ENCODE measurements at regions of chr11 and their contacts with region 1.

Region 1: GRCh38 chr11:119421941-119422808 is 797 bp downstream of the THY1 start:
- DNase-seq: no peak
- H3K4me3 ChIP-seq: peak overlapping the region; percentile 76 to 91 (median 90)
- H3K27ac ChIP-seq: peak overlapping the region; percentile 43
- H3K4me1 ChIP-seq: peaks cover 20 to 40% (median 27%) of the 10 kb centered on the region in 4 experiments
- H3K27me3 ChIP-seq: no peaks in the 10 kb centered on the region; a peak in 1 of 7 replicates
- CTCF ChIP-seq: no peak
- EP300 ChIP-seq: no peak
- POLR2A ChIP-seq: peak in 1 of 2 experiments; percentile 37; a peak in 1 of 3 replicates
- RAD21 ChIP-seq: no peak

Region 2: GRCh38 chr11:119373921-119374631 is 48.1 kb before region 1 on chr11:
- CTCF ChIA-PET with region 1: interaction called, 10 read pairs
- POLR2A ChIA-PET with region 1: interaction called, 5 read pairs
- DNase-seq: peak in 1 of 2 experiments; percentile 97
- H3K4me3 ChIP-seq: no peak overlapping the region
- H3K27ac ChIP-seq: no peak overlapping the region
- H3K4me1 ChIP-seq: peaks cover 8 to 51% (median 36%) of the 10 kb centered on the region in 4 experiments
- H3K27me3 ChIP-seq: peaks cover 0 to 3% (median 0%) of the 10 kb centered on the region in 4 experiments; a peak in 1 of 7 replicates
- CTCF ChIP-seq: peak; percentile 82 to 92 (median 89)
- EP300 ChIP-seq: no peak
- POLR2A ChIP-seq: no peak
- RAD21 ChIP-seq: peak; percentile 92 to 95

Region 3: DNA sequence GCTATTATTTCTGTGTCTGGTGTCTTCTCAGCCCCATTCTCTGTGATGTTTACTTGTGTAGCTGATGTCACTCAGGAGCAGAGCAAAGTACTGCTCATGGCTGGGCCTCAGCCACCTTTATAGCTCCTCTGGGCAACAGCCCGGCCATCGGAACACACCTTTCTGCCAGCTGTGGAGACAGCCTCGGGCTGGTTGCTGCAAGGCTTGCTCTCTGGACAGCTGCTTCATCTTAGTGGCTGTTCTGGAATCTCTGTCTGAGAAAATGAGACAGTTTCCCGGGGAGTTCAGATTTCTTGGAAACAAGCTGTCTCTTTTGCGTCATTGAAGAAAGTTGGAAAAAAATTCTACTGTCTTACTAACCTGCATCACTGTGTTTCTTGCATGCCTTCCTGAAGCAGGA is 19.2 kb before region 1 on chr11:
- CTCF ChIA-PET with region 1: interaction called, 5 read pairs
- POLR2A ChIA-PET with region 1: interaction called, 28 read pairs
- DNase-seq: no peak
- H3K4me3 ChIP-seq: no peak overlapping the region
- H3K27ac ChIP-seq: no peak overlapping the region
- H3K4me1 ChIP-seq: no peaks in the 10 kb centered on the region
- H3K27me3 ChIP-seq: no peaks in the 10 kb centered on the region
- CTCF ChIP-seq: no peak
- EP300 ChIP-seq: no peak
- POLR2A ChIP-seq: no peak
- RAD21 ChIP-seq: no peak

Region 4: GRCh38 chr11:119432484-119433357 is 10.5 kb after region 1 on chr11:
- CTCF ChIA-PET with region 1: interaction called, 4 read pairs
- POLR2A ChIA-PET with region 1: interaction called, 50 read pairs
- DNase-seq: no peak
- H3K4me3 ChIP-seq: no peak overlapping the region
- H3K27ac ChIP-seq: no peak overlapping the region
- H3K4me1 ChIP-seq: peaks cover 6 to 12% (median 8%) of the 10 kb centered on the region in 4 experiments
- H3K27me3 ChIP-seq: no peaks in the 10 kb centered on the region
- CTCF ChIP-seq: no peak
- EP300 ChIP-seq: no peak
- POLR2A ChIP-seq: no peak
- RAD21 ChIP-seq: no peak

Region 5: GRCh38 chr11:119550053-119550752 is 128.0 kb after region 1 on chr11:
- CTCF ChIA-PET with region 1: no interaction called
- POLR2A ChIA-PET with region 1: no interaction called
- DNase-seq: no peak
- H3K4me3 ChIP-seq: no peak overlapping the region
- H3K27ac ChIP-seq: no peak overlapping the region
- H3K4me1 ChIP-seq: no peaks in the 10 kb centered on the region; a peak in 1 of 7 replicates
- H3K27me3 ChIP-seq: no peaks in the 10 kb centered on the region; a peak in 1 of 7 replicates
- CTCF ChIP-seq: no peak
- EP300 ChIP-seq: no peak
- POLR2A ChIP-seq: no peak
- RAD21 ChIP-seq: no peak

Measured in H1 (cell line).